ENCODE measurements at regions of chr12 and their contacts with region 1.

Region 1: GRCh38 chr12:27014085-27014858 is at the start of gene TM7SF3:
- DNase-seq: peak; percentile 95
- CTCF ChIP-seq: peak; percentile 91

Region 2: DNA sequence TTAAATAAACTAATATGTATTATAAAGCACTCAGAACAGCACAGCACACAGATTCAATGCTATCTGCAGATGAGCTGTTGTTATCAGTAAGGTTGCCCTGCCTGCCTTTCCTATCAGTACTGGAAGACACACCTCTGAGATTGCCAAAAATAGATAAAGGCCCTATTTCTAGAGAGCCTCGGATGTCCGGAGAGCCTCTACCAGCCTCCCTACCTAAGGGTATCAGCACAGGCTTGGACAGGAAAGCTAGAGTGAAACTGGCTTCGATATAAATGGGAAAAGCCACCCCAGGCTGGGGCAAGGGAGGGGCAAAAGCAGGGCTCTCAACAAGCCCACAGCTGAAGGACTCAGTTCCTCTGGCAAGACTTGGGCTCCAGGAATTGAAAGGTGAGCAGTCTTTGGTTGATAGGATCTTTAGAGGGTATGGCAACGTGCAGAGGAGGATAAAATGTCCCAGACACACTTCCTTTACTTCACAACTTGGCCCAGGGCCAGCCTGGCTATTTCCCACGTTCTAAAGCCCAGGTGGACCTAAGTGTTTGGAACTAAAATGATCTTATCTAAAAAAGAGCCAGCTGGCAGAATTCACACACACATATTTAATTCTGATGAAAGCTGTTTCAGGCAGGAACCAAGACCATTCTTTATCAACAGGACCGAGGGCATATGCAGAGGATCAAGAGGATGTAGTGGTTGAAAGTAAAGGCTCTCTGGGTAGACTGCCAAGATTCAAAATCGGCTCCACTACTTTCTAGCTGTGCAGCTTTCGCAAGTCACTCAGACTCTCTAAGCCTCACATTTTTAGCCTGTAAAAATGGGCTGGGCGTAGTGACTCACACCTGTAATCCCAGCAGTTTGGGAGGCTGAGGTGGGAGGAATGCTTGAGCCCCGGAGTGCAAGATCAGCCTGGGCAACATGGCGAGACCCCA is 143.5 kb before region 1 on chr12:
- CTCF ChIA-PET with region 1: no interaction called
- POLR2A ChIA-PET with region 1: no interaction called
- DNase-seq: no peak
- CTCF ChIP-seq: no peak

Region 3: GRCh38 chr12:26997003-26997402 is 17.3 kb before region 1 on chr12:
- CTCF ChIA-PET with region 1: interaction called, 57 read pairs
- POLR2A ChIA-PET with region 1: no interaction called
- DNase-seq: no peak
- CTCF ChIP-seq: no peak

Region 4: DNA sequence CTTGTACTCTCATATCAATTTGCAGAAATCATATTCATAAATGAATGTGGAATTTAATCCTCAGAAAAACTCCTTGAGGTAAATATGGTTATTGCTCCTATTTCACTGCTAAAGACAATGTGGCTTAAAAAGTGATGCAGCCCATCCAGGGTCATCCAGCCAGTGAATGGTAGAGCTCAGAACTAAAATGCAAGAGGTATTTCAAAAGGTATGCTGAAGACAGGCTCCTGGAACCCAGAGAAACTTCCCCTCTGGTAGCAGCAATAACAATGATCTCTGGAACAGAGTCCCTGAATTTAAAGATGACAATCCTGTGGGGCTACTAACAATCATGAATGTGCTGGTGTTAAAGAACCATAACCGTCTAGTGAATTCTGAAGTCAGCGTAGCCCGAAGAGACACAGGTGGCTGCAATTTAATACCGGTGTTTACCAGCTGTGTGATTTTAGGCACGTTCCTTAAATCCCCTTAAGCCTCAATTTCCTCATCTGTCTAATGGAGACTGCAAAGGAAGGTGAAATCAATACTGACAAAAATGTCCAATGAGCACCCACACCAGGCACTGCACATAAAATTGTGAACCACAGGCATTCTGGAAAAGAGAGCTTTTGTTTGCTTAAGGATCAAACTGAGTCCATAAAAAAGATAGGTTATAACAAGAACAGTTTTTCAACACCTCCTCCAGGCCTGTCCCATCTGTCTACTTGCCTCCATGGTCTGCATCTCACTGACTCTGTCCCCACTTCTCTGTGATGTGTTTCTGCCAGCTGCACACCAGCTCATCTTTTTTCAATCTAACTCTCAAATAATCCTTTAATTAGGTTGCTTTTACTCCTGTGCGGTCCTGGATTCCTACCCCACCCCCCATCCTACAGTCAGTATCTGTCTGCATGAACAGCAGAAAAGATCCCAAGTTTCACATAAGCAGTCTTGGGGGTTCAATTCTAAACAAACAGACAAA is 10.6 kb before region 1 on chr12:
- CTCF ChIA-PET with region 1: interaction called, 57 read pairs
- POLR2A ChIA-PET with region 1: no interaction called
- DNase-seq: no peak
- CTCF ChIP-seq: no peak

Region 5: DNA sequence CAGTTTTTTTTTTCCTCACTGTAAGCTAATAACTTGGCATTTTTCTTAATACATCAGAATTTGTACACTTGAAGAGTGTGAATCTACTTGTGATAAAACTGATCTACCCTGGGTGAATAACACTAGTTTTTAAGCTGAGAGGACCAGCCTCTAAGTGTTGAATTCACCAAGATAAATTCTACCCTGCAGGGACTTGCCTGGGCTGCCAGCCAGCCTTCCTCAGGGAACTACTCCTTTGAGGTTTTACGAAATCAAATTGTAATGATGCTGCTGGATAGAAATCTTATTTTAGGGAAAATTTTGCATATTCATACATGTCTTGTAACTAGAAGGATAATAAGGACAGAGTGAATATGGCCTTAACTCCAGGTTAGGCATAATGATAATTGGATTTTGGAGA is 10.0 kb after region 1 on chr12:
- CTCF ChIA-PET with region 1: interaction called, 37 read pairs
- POLR2A ChIA-PET with region 1: no interaction called
- DNase-seq: no peak
- CTCF ChIP-seq: no peak

Measured in GM10248 (cell line).